Lower leg skin (tissue), 4 donors: ENCODE measurements at regions of chr1 and their contacts with region 1.

Region 1: GRCh38 chr1:38370716-38371504 is 324.3 kb upstream of the POU3F1 start:
- DNase-seq: no peak
- H3K4me3 ChIP-seq: no peak overlapping the region
- CTCF ChIP-seq: no peak
- POLR2A ChIP-seq: no peak

Region 2: DNA sequence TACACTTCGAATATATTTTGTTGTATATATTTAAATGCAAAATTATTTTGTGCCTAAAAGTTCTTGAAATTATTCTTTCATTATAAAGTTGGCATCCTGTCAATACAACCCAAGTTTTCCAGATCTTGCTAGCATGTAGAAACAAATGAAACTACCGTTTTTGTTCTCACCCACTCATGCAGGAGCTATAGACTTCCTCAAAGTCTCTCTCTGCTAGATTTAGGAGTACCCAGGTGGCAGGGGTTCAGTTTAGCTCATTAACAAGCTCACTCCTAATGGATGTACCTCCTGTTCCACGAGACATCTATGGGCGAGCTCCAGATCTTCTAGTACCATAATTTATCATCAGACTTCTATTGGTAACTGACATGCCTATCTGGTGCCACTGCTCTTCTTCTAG is 65.8 kb after region 1 on chr1:
- intact Hi-C with region 1: no loop called
- DNase-seq: no peak
- H3K4me3 ChIP-seq: no peak overlapping the region
- CTCF ChIP-seq: no peak
- POLR2A ChIP-seq: no peak

Region 3: GRCh38 chr1:38451541-38451993 is 80.7 kb after region 1 on chr1:
- intact Hi-C with region 1: loop called (anchors 10 kb)
- DNase-seq: no peak
- H3K4me3 ChIP-seq: no peak overlapping the region
- CTCF ChIP-seq: no peak
- POLR2A ChIP-seq: no peak